Posterior vena cava (tissue), 2 donors: ENCODE measurements at regions of chr19 and their contacts with region 1.

Region 1: GRCh38 chr19:17390665-17391370 is 3.2 kb downstream of the CCDC194 start:
- DNase-seq: peak; percentile 97

Region 2: GRCh38 chr19:17292286-17293097 is 98.3 kb before region 1 on chr19:
- intact Hi-C with region 1: loop called in 1 of 2 experiments (anchors 5 kb)
- DNase-seq: peak; percentile 89

Region 3: GRCh38 chr19:17336872-17337722 is 53.7 kb before region 1 on chr19 and contains the start of gene GTPBP3:
- intact Hi-C with region 1: loop called in 1 of 2 experiments (anchors 5 kb)
- DNase-seq: peak; percentile 98
- total RNA-seq, gene GTPBP3: 12.7 to 15.8 TPM

Region 4: DNA sequence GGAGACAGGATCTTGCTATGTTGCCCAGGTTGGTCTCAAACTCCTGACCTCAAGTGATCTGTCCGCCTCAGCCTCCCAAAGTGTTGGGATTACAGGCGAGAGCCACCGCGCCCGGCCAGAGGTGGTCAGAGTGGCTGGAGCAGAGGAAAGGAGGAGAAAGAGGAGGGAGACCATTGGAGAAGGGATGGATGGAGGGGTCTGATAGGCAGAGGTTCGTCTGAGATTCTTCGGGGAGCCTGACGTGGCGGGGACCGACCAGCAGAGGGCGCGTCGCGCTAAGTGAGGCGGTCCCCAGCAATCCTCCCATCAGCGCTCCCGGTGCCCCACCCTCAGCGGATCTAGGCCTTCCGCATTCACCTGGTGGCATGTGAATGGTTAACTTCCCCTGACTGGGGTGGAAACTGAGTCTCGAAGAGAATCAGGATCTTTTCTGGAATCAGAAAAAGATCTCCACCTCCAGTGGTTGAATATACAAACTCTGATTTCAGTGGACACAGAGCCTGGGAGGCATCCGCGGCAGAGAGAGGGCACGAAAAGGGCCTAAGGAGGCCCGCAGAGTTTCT is 44.6 kb before region 1 on chr19:
- intact Hi-C with region 1: loop called (anchors 2 to 5 kb)
- DNase-seq: peak; percentile 94

Region 5: GRCh38 chr19:17370026-17370587 is 20.7 kb before region 1 on chr19:
- intact Hi-C with region 1: no loop called
- DNase-seq: no peak

Region 6: DNA sequence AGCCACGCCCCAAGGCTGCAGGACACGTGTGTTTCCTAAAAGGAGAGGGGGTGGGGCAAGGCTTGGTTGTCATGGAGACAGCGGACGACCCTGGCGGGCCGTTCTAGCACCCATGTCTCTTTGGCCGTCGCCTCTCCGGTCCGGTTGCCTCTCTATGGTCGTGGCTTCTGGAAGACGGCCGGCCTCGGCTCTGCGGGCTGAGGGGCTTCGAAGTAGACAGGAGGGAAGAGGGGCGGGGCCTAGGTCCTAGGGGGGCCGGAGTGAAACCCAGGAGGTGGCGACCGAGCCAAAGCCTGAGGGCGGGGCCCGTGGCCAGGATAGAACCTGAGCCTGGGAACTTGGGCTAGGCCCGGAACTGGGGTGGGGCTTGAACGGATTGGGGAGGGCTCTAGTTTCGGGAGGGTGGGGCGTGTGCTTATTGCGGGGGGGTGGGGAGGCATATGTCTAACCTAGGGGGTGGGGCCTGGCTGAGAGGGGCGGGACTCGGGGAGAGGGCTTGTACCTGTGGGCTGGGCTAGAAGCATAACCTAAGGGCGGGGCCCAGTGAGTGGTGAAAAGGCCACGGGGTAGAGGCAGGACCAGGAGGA is 78.8 kb after region 1 on chr19:
- intact Hi-C with region 1: loop called in 1 of 2 experiments (anchors 5 kb)
- DNase-seq: peak; percentile 97